AG04449 (cell line): ENCODE measurements at regions of chr5 and their contacts with region 1.

Region 1: DNA sequence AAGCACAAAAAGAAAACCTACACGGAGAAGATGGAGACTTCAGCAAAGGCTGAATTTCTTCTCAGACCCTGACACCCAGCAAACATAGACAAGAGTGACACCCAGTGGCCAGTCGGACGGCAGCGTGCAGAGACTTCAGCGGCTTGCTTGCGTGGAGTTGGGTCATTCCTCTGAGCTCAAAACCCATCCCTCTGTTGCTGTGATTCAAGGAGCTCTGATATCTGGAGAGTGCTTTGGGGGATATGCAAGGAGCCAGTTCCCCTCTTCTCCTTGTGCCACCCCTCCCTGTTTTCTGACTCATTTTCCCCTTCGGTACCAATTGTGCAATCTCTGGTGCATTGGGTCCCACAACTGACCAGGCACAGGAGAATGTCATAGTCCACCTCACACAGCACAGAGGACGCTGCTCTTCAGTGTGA is 27.5 kb downstream of the SH3TC2 start:
- DNase-seq: no peak
- H3K4me3 ChIP-seq: no peak overlapping the region
- CTCF ChIP-seq: peak; percentile 92

Region 2: DNA sequence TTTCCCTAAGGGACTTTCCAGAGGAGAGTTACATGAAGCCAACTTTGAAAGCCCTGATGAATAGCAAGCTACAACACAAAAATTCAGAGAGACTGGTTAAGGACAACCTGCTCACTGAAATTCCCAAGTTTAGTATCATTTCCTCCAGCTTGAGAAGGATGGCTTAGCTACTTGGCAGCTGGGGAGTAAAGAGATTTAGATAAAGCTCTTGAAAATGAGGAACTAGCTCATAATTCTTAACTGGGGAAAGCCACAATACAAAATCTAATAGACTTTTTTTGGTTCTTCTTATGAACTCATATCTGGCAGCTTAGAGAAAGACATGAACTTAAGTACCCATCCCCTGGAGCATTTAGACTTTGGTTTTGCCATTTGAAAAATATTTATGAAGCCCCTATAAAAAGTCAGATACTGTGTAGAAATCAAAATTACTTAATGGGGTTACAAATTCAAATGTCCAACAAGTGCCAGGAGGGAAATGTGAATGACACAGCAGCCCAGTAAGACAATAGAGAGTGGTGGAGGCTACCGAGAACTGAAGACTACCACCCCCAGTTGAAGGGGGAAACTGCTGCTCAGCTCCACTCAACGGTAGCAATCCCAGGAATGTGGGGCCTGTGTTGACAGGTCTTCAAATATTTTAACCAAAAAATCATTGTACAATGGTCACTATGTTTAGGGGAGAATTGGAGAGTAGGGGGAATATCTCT is 288.4 kb before region 1 on chr5:
- CTCF ChIA-PET with region 1: interaction called, 911 read pairs
- POLR2A ChIA-PET with region 1: no interaction called
- DNase-seq: peak; percentile 38
- H3K4me3 ChIP-seq: no peak overlapping the region
- CTCF ChIP-seq: no peak

Region 3: DNA sequence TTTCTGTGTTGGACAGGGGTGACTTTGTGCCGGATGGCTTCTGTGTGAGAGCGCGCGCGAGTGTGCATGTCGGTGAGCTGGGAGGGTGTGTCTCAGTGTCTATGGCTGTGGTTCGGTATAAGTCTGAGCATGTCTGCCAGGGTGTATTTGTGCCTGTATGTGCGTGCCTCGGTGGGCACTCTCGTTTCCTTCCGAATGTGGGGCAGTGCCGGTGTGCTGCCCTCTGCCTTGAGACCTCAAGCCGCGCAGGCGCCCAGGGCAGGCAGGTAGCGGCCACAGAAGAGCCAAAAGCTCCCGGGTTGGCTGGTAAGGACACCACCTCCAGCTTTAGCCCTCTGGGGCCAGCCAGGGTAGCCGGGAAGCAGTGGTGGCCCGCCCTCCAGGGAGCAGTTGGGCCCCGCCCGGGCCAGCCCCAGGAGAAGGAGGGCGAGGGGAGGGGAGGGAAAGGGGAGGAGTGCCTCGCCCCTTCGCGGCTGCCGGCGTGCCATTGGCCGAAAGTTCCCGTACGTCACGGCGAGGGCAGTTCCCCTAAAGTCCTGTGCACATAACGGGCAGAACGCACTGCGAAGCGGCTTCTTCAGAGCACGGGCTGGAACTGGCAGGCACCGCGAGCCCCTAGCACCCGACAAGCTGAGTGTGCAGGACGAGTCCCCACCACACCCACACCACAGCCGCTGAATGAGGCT is 209.2 kb before region 1 on chr5 and contains the start of gene ADRB2:
- CTCF ChIA-PET with region 1: interaction called, 41 read pairs
- POLR2A ChIA-PET with region 1: no interaction called
- DNase-seq: peak; percentile 51
- H3K4me3 ChIP-seq: peak within 1 kb of the TSS; percentile 79
- CTCF ChIP-seq: no peak

Region 4: GRCh38 chr5:148988328-148988727 is 47.1 kb before region 1 on chr5:
- CTCF ChIA-PET with region 1: interaction called, 11 read pairs
- POLR2A ChIA-PET with region 1: no interaction called
- DNase-seq: no peak
- H3K4me3 ChIP-seq: no peak overlapping the region
- CTCF ChIP-seq: no peak

Region 5: DNA sequence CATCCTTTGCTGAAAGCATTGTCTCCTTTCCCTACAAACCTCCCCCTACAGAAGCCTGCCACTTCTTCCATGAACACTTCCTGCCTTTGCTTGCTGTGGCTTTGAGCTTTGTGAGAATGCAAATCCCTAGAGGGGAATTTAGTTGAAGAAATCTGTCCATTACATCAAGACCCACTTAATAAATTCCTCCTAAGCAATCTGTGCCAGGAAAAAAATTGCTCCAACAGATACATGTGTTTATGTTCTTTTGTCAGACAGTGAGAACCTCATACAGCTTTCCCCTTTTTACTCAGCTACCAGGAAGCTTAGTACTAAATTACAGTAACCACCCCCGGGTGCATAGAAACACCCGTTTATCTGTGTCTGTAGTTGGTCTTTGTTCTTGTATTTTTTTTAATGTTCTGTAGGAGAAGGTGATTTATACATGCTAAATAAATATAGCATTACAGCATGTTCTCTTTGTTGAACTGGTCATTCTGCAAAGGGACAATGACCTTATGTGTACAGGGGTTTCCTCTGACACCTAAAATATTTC is 16.4 kb before region 1 on chr5:
- CTCF ChIA-PET with region 1: interaction called, 68 read pairs
- POLR2A ChIA-PET with region 1: interaction called, 3 read pairs
- DNase-seq: peak; percentile 59
- H3K4me3 ChIP-seq: no peak overlapping the region
- CTCF ChIP-seq: no peak

Region 6: DNA sequence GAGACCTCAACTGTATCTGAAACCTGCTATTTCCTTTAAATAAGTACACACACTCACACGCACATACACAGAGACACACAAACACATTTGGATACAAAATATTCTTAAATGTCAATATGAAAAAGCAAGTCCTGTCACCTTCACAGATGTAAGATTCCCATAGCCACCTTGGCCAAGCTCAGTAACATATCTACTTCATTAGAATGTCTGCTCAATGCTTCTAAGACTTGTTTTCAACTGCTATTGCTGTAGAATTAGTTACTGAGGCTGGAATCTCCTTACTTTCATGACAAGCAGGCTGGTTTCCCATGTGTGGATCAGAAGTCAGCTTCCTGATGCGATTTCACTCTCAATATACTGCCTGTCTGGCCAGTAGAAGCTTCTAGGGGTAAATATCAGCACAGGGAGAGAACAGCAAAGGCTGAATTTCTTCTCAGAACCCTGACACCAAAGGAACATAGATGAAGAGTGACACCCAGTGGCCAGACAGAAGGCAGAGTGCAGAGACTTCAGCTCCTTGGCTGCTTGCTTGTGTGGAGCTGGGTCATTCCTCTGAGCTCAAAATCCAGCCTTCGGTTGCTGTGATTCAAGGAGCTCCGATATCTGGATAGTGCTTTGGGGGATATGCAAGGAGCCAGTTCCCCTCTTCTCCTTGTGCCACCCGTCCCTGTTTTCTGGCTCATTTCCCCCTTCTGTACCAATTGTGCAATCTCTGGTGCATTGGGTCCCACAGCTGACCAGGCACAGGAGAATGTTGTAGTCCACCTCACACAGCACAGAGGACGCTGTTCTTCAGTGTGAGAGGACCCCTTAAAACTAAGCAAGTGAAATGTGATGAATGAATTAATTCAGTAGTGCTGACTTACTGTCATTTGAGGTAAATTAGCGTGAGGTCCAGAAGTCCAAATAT is 79.3 kb after region 1 on chr5:
- CTCF ChIA-PET with region 1: interaction called, 126 read pairs
- POLR2A ChIA-PET with region 1: interaction called, 5 read pairs
- DNase-seq: peak; percentile 54
- H3K4me3 ChIP-seq: no peak overlapping the region
- CTCF ChIP-seq: peak; percentile 86

Region 7: DNA sequence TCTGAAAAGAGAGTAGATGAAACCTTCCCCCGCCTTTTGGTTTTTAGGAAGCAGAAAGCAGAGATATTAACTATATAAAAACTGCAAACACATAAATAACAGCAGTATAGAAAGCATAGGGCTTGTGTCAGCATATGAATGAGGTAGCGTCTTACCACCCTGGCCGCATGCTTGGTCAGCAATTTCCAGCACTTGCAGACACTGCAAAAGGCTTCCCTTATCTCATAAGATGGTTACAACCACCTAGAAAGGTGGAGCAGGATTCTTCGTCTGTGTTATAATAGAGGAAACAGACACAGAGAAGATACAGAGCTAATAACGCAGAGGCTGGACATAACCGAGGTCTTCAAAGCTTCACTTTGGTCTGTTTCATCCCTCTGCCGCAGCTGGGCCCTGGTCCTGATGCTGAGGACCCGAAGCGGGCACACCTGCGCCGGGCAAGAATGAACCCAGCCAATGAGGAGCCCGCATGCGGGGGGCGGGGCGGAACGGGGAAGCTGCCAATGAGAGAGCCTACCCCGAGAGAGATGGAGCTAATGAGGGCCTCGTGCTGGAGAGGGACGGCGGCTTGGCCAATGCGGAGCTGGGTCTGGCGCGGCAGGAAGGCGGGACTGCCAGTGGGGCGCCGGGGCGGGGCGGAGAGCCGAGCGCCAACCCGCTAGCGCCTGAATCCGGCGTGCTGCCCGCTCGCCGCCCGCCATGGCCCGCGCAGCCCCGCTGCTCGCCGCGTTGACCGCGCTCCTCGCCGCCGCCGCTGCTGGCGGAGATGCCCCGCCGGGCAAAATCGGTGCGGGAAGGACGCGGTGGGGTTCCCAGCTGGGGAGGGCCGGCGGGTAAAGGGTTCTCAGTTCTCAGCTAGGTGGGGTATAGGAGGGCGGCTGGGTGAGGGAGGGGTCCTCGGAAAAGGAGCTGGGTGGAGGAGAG is 322.3 kb after region 1 on chr5 and contains the start of gene PCYOX1L:
- CTCF ChIA-PET with region 1: no interaction called
- POLR2A ChIA-PET with region 1: no interaction called
- DNase-seq: peak; percentile 63
- H3K4me3 ChIP-seq: peak within 1 kb of the TSS; percentile 73
- CTCF ChIP-seq: no peak